ENCODE measurements at regions of chr18 and their contacts with region 1.

Region 1: GRCh38 chr18:48928787-48929186 is 22.0 kb downstream of the SMAD7 start:
- DNase-seq: peak; percentile 71
- H3K4me3 ChIP-seq: no peak overlapping the region
- H3K27ac ChIP-seq: peak overlapping the region; percentile 70 to 77
- H3K4me1 ChIP-seq: peaks cover 46% of the 10 kb centered on the region
- H3K27me3 ChIP-seq: no peaks in the 10 kb centered on the region
- CTCF ChIP-seq: no peak
- POLR2A ChIP-seq: no peak

Region 2: GRCh38 chr18:48889115-48889941 is 39.5 kb before region 1 on chr18:
- intact Hi-C with region 1: loop called (anchors 5 kb)
- DNase-seq: no peak
- H3K4me3 ChIP-seq: no peak overlapping the region
- H3K27ac ChIP-seq: no peak overlapping the region
- H3K4me1 ChIP-seq: peaks cover 23% of the 10 kb centered on the region
- H3K27me3 ChIP-seq: no peaks in the 10 kb centered on the region
- CTCF ChIP-seq: no peak
- POLR2A ChIP-seq: no peak